Pancreas (tissue), 10 donors: ENCODE measurements at regions of chr9 and their contacts with region 1.

Region 1: GRCh38 chr9:36450110-36450732 is 50.2 kb upstream of the RNF38 start:
- DNase-seq: peak in 1 of 6 donors; percentile 31
- ATAC-seq: peak in 3 of 4 donors; percentile 51 to 77 (median 64)
- H3K4me3 ChIP-seq: no peak overlapping the region
- H3K27ac ChIP-seq: no peak overlapping the region
- H3K4me1 ChIP-seq: peaks cover 0 to 9% (median 8%) of the 10 kb centered on the region in 3 donors
- H3K27me3 ChIP-seq: no peaks in the 10 kb centered on the region
- CTCF ChIP-seq: peak; percentile 10 to 47 (median 43)

Region 2: GRCh38 chr9:36222449-36222848 is 227.8 kb before region 1 on chr9:
- intact Hi-C with region 1: no loop called
- DNase-seq: no peak
- ATAC-seq: no peak
- H3K4me3 ChIP-seq: no peak overlapping the region
- H3K27ac ChIP-seq: no peak overlapping the region
- H3K4me1 ChIP-seq: no peaks in the 10 kb centered on the region
- H3K27me3 ChIP-seq: no peaks in the 10 kb centered on the region
- CTCF ChIP-seq: no peak

Region 3: DNA sequence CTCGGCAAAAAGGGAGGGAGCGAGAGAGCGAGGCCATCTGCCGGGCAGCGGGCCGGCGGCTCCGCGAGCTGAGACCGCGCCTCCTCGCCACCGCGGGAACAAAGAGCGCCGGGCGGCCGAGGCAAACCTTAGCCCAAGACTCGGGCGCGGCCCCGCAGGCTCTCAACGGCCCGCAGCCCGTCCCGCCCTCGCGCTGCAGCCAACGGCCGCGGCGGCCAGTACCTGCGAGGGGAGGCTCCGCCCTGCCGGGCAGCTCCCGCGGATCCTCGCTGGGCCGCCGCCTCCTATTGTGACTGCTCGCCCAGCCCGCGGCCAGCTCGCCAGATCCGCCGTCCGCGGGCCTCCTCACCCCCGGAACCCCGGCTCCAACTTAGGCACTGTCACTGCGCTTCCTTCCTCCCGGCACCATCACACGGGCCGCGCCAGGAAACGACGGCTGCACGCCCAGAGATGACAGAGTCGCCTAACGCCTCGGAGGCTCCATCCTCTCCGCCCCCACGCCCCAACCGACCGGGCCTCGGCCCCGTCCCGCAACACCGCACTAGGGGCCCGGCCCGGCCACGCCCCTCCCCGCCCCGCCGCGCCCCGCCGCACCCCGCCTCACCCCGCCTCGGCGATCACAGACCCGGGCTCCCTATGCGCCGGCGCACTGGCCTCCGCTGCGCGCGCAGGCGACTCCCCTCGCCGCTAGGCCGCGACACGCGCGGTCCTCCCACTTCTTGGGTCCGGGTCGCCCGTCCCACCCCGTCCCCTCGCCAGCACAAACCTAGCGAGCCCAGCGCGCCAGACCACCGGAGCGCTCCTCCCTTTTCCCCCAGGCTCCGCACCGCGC is 49.7 kb before region 1 on chr9:
- intact Hi-C with region 1: loop called in 1 of 3 experiments (anchors 10 kb)
- DNase-seq: peak; percentile 83 to 96 (median 90)
- ATAC-seq: peak; percentile 87 to 94 (median 90)
- H3K4me3 ChIP-seq: peak overlapping the region; percentile 62 to 89 (median 84)
- H3K27ac ChIP-seq: peak overlapping the region; percentile 84 to 95 (median 94)
- H3K4me1 ChIP-seq: peaks cover 21 to 27% (median 22%) of the 10 kb centered on the region in 3 donors
- H3K27me3 ChIP-seq: no peaks in the 10 kb centered on the region
- CTCF ChIP-seq: no peak